Mammary epithelial cell (primary cell): ENCODE measurements at regions of chr6 and their contacts with region 1.

Region 1: GRCh38 chr6:127539272-127539671 is 20.1 kb upstream of the MTCL3 start:
- DNase-seq: no peak
- H3K4me3 ChIP-seq: no peak overlapping the region
- H3K27ac ChIP-seq: no peak overlapping the region
- H3K4me1 ChIP-seq: no peaks in the 10 kb centered on the region
- H3K27me3 ChIP-seq: no peaks in the 10 kb centered on the region
- CTCF ChIP-seq: peak; percentile 28 to 29

Region 2: DNA sequence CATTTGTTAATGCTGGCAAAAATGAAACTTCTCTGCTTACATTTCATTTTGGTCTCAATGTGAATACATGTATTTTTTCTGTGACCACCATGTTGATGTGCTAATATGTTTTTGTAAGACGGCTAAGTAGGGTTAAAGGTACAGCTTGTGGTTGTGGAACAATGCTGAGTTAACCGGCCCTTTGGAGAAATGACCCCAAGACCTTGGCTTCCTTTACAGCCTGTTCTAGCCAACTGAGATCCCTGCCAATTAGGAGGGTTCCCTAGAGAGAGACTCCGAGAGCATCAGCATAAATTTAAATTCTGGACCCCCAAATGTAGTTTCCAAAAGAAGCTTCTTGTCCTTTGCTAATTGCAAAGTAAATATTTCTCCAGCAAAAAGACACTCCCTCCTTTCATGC is 376.4 kb before region 1 on chr6:
- CTCF ChIA-PET with region 1: interaction called, 11 read pairs
- dilution Hi-C with region 1: no loop called
- in situ Hi-C with region 1: no loop called
- intact Hi-C with region 1: no loop called
- DNase-seq: no peak
- H3K4me3 ChIP-seq: no peak overlapping the region
- H3K27ac ChIP-seq: no peak overlapping the region
- H3K4me1 ChIP-seq: no peaks in the 10 kb centered on the region
- H3K27me3 ChIP-seq: peaks cover 7% of the 10 kb centered on the region
- CTCF ChIP-seq: no peak

Region 3: DNA sequence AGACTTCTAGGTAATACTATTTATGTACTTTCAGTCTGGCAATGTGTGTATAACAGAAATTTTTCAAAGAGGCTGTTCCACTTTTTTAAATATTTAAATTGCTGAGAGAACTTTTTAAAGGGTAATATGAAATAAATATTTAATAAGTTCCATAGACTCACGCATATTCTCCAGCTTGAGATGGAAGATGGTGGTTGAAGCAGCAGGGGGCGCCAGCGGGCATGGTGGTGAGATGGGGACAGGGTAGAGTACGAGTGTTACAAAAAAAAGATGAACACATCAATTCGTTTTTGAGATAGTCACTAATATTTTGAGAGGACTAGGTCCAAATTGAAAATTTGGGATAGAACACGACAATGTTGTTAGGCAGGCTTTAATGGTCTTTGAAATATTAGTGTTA is 352.4 kb before region 1 on chr6:
- CTCF ChIA-PET with region 1: no interaction called
- dilution Hi-C with region 1: no loop called
- in situ Hi-C with region 1: no loop called
- intact Hi-C with region 1: loop called (anchors 5 kb)
- DNase-seq: peak; percentile 24
- H3K4me3 ChIP-seq: no peak overlapping the region
- H3K27ac ChIP-seq: no peak overlapping the region
- H3K4me1 ChIP-seq: no peaks in the 10 kb centered on the region
- H3K27me3 ChIP-seq: peaks cover 10% of the 10 kb centered on the region
- CTCF ChIP-seq: peak; percentile 61 to 69

Region 4: GRCh38 chr6:127302728-127303660 is 236.3 kb before region 1 on chr6:
- CTCF ChIA-PET with region 1: no interaction called
- dilution Hi-C with region 1: no loop called
- in situ Hi-C with region 1: loop called (anchors 25 kb)
- intact Hi-C with region 1: loop called (anchors 2 kb)
- DNase-seq: peak; percentile 33
- H3K4me3 ChIP-seq: no peak overlapping the region
- H3K27ac ChIP-seq: no peak overlapping the region
- H3K4me1 ChIP-seq: peaks cover 7% of the 10 kb centered on the region
- H3K27me3 ChIP-seq: no peaks in the 10 kb centered on the region
- CTCF ChIP-seq: peak; percentile 68 to 87

Region 5: GRCh38 chr6:127464881-127465459 is 74.3 kb before region 1 on chr6:
- CTCF ChIA-PET with region 1: interaction called, 4 read pairs
- dilution Hi-C with region 1: no loop called
- in situ Hi-C with region 1: no loop called
- intact Hi-C with region 1: loop called (anchors 1 kb)
- DNase-seq: peak; percentile 43
- H3K4me3 ChIP-seq: no peak overlapping the region
- H3K27ac ChIP-seq: no peak overlapping the region
- H3K4me1 ChIP-seq: no peaks in the 10 kb centered on the region
- H3K27me3 ChIP-seq: peaks cover 3% of the 10 kb centered on the region
- CTCF ChIP-seq: peak; percentile 92 to 93